ENCODE measurements at regions of chr1 and their contacts with region 1.

Region 1: DNA sequence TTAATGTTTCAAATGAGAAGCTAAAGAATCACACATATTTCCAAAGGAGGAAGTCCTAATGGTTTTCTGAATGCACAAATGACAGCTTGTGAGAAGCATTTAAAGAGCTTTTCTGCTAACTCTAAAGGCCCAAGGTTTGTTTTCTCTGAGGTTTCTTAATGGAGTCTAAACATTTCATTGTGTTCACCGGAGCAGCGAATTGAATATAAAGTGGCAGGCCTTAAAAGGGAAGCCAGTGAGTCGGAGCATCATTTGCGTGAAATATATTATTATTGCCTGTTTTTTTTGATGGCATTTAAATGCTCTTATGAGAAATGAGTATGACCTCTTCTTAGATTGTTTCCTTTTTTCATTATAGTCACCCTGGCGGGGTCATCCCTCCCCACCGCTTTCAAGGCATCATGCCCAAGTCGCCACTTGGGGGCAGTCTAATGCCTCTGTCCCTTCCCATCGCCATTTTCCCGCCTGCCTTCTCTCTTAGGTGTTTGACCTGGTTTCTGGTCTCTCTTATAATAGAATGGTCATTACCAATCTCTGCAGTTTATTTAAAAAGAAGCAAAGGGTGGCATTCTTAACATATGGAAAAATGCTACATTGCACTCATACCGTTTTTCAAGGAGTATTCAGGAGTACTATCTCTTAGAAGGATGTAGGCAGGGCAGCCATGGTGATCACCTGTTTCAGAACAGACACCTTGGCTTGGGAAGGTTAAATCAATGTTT is 25.3 kb upstream of the OVAAL start:
- DNase-seq: peak; percentile 81
- H3K4me3 Mint-ChIP-seq: no peak overlapping the region
- H3K27ac Mint-ChIP-seq: no peak overlapping the region
- H3K4me1 Mint-ChIP-seq: no peaks in the 10 kb centered on the region
- H3K27me3 Mint-ChIP-seq: peaks cover 8% of the 10 kb centered on the region

Region 2: GRCh38 chr1:180778782-180779398 is 245.5 kb after region 1 on chr1:
- CTCF ChIA-PET with region 1: no interaction called
- POLR2A ChIA-PET with region 1: no interaction called
- intact Hi-C with region 1: loop called (anchors 10 kb)
- DNase-seq: no peak
- H3K4me3 Mint-ChIP-seq: no peak overlapping the region
- H3K27ac Mint-ChIP-seq: no peak overlapping the region
- H3K4me1 Mint-ChIP-seq: peaks cover 2% of the 10 kb centered on the region
- H3K27me3 Mint-ChIP-seq: no peaks in the 10 kb centered on the region